ENCODE measurements at regions of chr1 and their contacts with region 1.

Region 1: GRCh38 chr1:63411066-63411465 is 43.6 kb downstream of the ALG6 start:
- DNase-seq: no peak
- H3K4me3 ChIP-seq: no peak overlapping the region
- H3K27ac ChIP-seq: no peak overlapping the region
- H3K4me1 ChIP-seq: no peaks in the 10 kb centered on the region
- CTCF ChIP-seq: no peak

Region 2: GRCh38 chr1:63423649-63424048 is 12.6 kb after region 1 on chr1:
- CTCF ChIA-PET with region 1: no interaction called
- POLR2A ChIA-PET with region 1: interaction called, 11 read pairs
- intact Hi-C with region 1: no loop called
- DNase-seq: no peak
- H3K4me3 ChIP-seq: no peak overlapping the region
- H3K27ac ChIP-seq: no peak overlapping the region
- H3K4me1 ChIP-seq: no peaks in the 10 kb centered on the region
- CTCF ChIP-seq: no peak

Region 3: GRCh38 chr1:63463248-63463647 is 52.2 kb after region 1 on chr1:
- CTCF ChIA-PET with region 1: no interaction called
- POLR2A ChIA-PET with region 1: no interaction called
- intact Hi-C with region 1: no loop called
- DNase-seq: no peak
- H3K4me3 ChIP-seq: no peak overlapping the region
- H3K27ac ChIP-seq: no peak overlapping the region
- H3K4me1 ChIP-seq: no peaks in the 10 kb centered on the region
- CTCF ChIP-seq: no peak

Measured in OCI-LY7 (cell line).